ENCODE measurements at regions of chr4 and their contacts with region 1.

Region 1: DNA sequence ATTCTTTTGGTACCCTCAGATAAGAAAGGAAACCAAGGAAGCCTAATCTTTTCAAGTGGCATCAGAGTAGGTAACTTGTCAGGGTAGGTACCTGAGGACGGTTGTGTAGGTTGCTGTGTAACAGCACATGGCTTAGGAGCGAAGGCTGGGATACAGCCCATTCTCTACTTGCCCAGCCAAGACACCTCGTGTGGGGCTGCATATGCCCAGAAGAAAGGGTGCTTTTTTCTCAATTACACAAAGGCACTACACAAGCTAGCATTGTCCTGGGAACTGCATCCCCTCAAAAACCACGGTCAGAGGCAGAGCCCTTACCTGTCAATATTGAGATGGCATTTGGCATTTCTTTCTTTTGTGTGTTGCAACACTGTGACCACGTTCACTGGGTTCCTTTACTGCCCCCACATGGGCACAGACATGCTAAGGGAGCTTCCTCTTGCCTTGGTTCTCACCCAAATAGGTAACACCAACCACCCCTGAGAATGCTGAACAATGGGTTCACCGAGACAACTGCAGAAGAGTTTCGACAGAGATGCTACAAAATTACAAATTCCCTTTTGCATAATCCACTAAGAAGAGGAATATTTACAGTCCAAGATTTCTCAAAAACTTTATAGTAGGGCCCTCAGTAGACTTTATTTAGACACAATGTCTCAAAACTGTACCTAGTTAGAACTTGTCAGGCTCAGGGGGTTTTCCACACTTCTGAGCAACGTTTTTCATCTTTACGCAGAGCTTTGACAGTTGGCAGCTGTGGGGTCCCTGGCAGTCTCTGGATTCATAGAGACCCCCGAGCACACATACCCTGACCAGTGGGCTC is 35.8 kb upstream of the TNIP3 start:
- DNase-seq: peak; percentile 50
- ATAC-seq: peak; percentile 92
- H3K4me3 Mint-ChIP-seq: no peak overlapping the region
- H3K27ac Mint-ChIP-seq: peak overlapping the region; percentile 34
- H3K4me1 Mint-ChIP-seq: peaks cover 27% of the 10 kb centered on the region
- H3K27me3 Mint-ChIP-seq: no peaks in the 10 kb centered on the region

Region 2: DNA sequence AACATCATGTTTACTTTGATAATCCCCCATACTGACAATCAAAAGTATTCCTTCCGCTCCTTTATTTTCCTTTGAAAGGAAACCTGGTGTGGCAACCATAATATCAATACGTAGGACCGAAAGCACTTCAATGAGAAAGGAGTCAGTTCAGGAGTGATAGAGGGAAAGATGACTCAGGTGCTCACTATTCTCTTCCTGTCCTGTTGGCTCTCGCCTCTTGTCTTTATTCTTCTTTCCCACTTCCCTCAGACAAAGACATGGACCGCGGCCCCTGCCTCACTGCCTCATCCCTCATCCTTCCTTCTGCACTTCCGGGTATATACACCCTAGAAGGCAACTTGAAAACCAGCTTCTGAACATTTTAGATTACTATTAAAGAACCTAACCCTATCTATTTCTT is 14.0 kb after region 1 on chr4:
- CTCF ChIA-PET with region 1: interaction called, 6 read pairs
- POLR2A ChIA-PET with region 1: no interaction called
- intact Hi-C with region 1: loop called in 1 of 2 experiments (anchors 2 kb)
- DNase-seq: no peak
- ATAC-seq: peak; percentile 61
- H3K4me3 Mint-ChIP-seq: no peak overlapping the region
- H3K27ac Mint-ChIP-seq: no peak overlapping the region
- H3K4me1 Mint-ChIP-seq: peaks cover 10% of the 10 kb centered on the region
- H3K27me3 Mint-ChIP-seq: no peaks in the 10 kb centered on the region